ENCODE measurements at regions of chr16 and their contacts with region 1.

Region 1: DNA sequence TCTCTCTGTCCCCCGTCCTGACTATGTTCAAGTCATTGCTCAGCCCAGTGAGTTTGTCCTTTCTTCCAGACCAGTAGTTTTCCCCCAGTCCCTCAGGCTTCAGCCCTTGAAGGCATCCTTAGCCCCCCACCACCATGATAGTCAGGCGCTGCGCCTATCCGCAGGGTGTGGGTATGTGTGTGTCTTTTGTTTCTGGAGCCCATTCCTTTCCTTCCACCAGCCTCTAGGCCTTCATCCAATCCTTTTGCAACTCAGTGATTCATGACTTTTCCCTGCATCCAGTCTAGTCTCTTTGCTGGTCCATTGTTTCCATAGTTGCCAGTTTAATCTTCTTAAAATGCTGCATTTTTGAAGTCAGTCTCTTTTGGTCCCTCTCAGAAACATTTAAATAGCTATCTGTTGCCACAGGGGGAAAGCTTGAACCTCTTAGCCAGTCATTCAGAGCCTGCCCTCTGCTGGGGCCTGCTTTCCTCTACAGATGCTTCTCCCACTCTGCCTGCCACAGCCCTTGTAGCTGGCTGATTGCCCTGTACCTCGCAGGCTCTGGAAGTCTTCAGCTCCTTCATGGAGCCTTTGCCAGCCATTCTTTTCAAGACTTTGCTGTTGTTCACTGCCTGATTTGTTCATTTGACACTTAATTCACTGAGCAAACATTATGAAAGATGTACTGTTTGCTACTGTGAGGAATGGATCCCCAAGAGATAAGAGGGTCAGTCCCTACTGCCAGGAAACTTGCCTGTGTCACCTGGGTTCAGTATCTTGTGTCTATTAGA is 55.9 kb upstream of the ADCY7 start:
- DNase-seq: peak; percentile 84
- ATAC-seq: peak; percentile 97
- H3K4me3 Mint-ChIP-seq: no peak overlapping the region
- H3K27ac Mint-ChIP-seq: peak overlapping the region; percentile 58
- H3K4me1 Mint-ChIP-seq: peaks cover 27% of the 10 kb centered on the region
- H3K27me3 Mint-ChIP-seq: no peaks in the 10 kb centered on the region
- CTCF ChIP-seq: peak; percentile 70

Region 2: DNA sequence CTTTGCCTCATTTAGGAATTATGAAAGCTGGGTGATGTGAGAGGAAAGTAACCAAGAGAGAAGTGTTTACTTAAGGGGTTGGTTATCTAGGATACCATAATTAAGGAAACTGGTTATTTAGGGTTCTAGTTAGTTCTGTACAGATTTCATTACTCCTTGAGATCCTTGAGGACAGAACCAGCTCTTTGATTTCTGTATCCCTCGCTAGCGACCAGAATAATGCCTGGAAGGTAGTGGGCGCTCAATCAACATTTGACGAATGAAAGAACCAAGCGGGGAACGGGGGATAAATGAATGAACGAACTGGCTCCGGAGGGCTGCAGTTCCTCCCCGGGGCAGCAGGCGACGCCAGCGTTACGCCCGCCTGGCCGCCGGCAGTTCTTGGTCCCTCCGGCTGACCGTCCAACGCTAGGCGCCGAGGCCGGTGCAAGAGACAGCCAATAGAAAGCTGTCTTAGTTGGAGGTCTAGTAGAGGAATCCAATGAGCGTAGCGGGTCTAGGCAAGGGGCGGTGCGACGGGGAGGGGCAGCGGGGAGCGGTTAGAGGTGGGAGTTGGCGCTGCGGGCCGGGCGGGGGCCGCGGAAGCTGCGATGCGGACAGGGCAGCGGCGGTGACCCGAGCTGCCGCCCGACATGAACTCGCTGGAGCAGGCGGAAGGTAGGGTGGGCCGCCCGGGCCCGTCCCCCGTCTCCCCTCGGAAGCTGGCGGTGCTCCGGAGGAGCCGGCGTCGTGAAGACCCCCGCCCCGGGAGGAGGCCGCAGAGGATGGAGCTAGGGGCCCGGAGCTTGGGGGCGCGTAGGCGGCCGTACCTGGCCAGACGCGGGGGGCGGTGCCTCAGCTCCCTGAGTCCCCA is 185.5 kb before region 1 on chr16 and contains the start of gene CNEP1R1:
- CTCF ChIA-PET with region 1: interaction called, 110 read pairs
- POLR2A ChIA-PET with region 1: no interaction called
- intact Hi-C with region 1: loop called (anchors 10 kb)
- DNase-seq: peak; percentile 94
- ATAC-seq: peak; percentile 97
- H3K4me3 Mint-ChIP-seq: peak within 1 kb of the TSS; percentile 92
- H3K27ac Mint-ChIP-seq: peak within 1 kb of the TSS; percentile 86
- H3K4me1 Mint-ChIP-seq: peaks cover 22% of the 10 kb centered on the region
- H3K27me3 Mint-ChIP-seq: no peaks in the 10 kb centered on the region
- CTCF ChIP-seq: peak; percentile 98
- total RNA-seq, gene CNEP1R1: 19.1 to 19.9 TPM

Region 3: GRCh38 chr16:50081428-50082018 is 128.9 kb before region 1 on chr16:
- CTCF ChIA-PET with region 1: interaction called, 11 read pairs
- POLR2A ChIA-PET with region 1: no interaction called
- intact Hi-C with region 1: no loop called
- DNase-seq: no peak
- ATAC-seq: no peak
- H3K4me3 Mint-ChIP-seq: no peak overlapping the region
- H3K27ac Mint-ChIP-seq: peak overlapping the region; percentile 24
- H3K4me1 Mint-ChIP-seq: peaks cover 22% of the 10 kb centered on the region
- H3K27me3 Mint-ChIP-seq: no peaks in the 10 kb centered on the region
- CTCF ChIP-seq: no peak

Region 4: GRCh38 chr16:50146479-50147435 is 63.7 kb before region 1 on chr16:
- CTCF ChIA-PET with region 1: interaction called, 13 read pairs
- POLR2A ChIA-PET with region 1: no interaction called
- intact Hi-C with region 1: loop called (anchors 10 kb)
- DNase-seq: no peak
- ATAC-seq: no peak
- H3K4me3 Mint-ChIP-seq: no peak overlapping the region
- H3K27ac Mint-ChIP-seq: no peak overlapping the region
- H3K4me1 Mint-ChIP-seq: peaks cover 6% of the 10 kb centered on the region
- H3K27me3 Mint-ChIP-seq: no peaks in the 10 kb centered on the region
- CTCF ChIP-seq: no peak

Region 5: GRCh38 chr16:50160495-50161164 is 49.8 kb before region 1 on chr16:
- CTCF ChIA-PET with region 1: interaction called, 11 read pairs
- POLR2A ChIA-PET with region 1: no interaction called
- intact Hi-C with region 1: loop called (anchors 10 kb)
- DNase-seq: no peak
- ATAC-seq: peak; percentile 89
- H3K4me3 Mint-ChIP-seq: peak overlapping the region; percentile 53
- H3K27ac Mint-ChIP-seq: peak overlapping the region; percentile 96
- H3K4me1 Mint-ChIP-seq: peaks cover 61% of the 10 kb centered on the region
- H3K27me3 Mint-ChIP-seq: no peaks in the 10 kb centered on the region
- CTCF ChIP-seq: no peak

Region 6: DNA sequence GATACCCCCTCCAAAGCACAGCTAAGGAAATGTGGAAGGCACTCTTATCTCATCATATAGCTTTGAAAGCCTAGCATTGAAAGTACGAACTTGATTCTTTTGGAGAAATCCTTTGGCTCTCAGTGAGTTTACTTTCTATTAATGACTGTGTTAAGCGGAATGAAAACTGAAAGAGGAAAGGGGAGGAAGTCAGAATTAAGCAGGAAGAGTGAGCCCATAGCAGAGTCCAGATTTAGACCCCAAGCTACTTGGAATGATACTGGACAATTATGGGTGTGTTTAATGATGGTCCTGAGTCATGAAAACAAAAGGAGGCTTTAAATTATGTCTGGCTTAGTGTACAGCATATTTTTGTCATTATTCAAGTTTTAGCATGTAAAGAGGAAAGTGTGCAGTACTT is 15.2 kb before region 1 on chr16:
- CTCF ChIA-PET with region 1: interaction called, 41 read pairs
- POLR2A ChIA-PET with region 1: no interaction called
- intact Hi-C with region 1: no loop called
- DNase-seq: no peak
- ATAC-seq: no peak
- H3K4me3 Mint-ChIP-seq: no peak overlapping the region
- H3K27ac Mint-ChIP-seq: peak overlapping the region; percentile 22
- H3K4me1 Mint-ChIP-seq: peaks cover 58% of the 10 kb centered on the region
- H3K27me3 Mint-ChIP-seq: no peaks in the 10 kb centered on the region
- CTCF ChIP-seq: no peak

Region 7: GRCh38 chr16:50303657-50304466 is 93.4 kb after region 1 on chr16:
- CTCF ChIA-PET with region 1: no interaction called
- POLR2A ChIA-PET with region 1: no interaction called
- intact Hi-C with region 1: no loop called
- DNase-seq: no peak
- ATAC-seq: no peak
- H3K4me3 Mint-ChIP-seq: no peak overlapping the region
- H3K27ac Mint-ChIP-seq: no peak overlapping the region
- H3K4me1 Mint-ChIP-seq: peaks cover 2% of the 10 kb centered on the region
- H3K27me3 Mint-ChIP-seq: no peaks in the 10 kb centered on the region
- CTCF ChIP-seq: no peak

Region 8: DNA sequence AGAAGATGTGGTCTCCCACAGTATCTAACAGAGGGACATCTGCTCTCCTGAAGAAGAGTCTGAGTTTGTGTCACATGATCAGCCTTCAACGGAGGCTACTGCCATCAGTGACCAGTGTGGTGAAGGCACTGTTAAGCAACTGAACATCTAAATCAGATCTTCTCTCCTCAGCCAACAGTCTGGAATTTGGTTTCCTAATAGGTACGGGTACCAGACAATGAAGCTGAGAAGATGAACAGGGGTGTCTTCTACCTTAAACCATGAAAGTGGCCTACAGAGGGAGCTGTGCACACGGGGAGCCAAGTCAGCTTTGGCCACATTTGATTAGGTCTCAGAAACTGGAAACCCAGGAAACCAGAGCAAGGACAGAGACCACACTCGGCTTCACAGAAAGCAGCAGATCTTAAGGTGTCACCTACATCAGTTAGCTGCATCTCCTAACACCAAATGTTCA is 116.5 kb after region 1 on chr16:
- CTCF ChIA-PET with region 1: interaction called, 11 read pairs
- POLR2A ChIA-PET with region 1: no interaction called
- intact Hi-C with region 1: loop called (anchors 10 kb)
- DNase-seq: peak; percentile 86
- ATAC-seq: peak; percentile 95
- H3K4me3 Mint-ChIP-seq: no peak overlapping the region
- H3K27ac Mint-ChIP-seq: peak overlapping the region; percentile 73
- H3K4me1 Mint-ChIP-seq: peaks cover 51% of the 10 kb centered on the region
- H3K27me3 Mint-ChIP-seq: no peaks in the 10 kb centered on the region
- CTCF ChIP-seq: peak; percentile 65

Region 9: DNA sequence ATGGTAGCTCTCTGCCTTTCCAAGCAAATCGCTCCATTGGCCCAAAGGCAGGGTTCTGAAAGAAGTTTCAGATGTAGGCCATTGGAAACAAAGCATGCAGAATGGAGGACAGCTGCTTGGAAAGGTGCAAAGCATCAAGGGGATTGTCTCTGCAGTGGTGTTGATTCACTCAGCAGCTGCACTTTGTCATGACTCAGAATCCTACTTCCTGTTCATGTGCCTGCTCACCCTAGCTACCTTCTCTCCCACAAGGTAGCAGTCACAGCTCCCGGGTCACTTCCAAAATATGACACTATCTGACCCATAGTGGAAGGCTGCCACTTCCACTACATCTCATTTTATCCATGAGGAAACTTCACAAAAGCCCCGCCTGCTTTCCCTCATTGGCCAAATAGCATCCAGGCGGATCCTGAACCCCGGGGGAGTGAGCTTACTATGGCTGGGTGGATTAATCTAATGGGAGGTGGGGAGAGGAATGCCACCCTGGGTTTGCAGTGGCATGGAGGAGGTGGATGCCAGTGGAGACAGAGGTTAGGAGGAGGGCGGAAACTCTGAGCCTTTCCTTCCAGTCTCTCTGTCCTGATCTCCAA is 263.0 kb after region 1 on chr16:
- CTCF ChIA-PET with region 1: no interaction called
- POLR2A ChIA-PET with region 1: no interaction called
- intact Hi-C with region 1: no loop called
- DNase-seq: peak; percentile 44
- ATAC-seq: peak; percentile 75
- H3K4me3 Mint-ChIP-seq: no peak overlapping the region
- H3K27ac Mint-ChIP-seq: peak overlapping the region; percentile 17
- H3K4me1 Mint-ChIP-seq: peaks cover 21% of the 10 kb centered on the region
- H3K27me3 Mint-ChIP-seq: peaks cover 6% of the 10 kb centered on the region
- CTCF ChIP-seq: no peak

Measured in activated CD8-positive, alpha-beta T cell treated with anti-CD3 and anti-CD28 coated beads for 36 hours (primary cell).